MCF 10A (cell line): ENCODE measurements at regions of chr11 and their contacts with region 1.

Region 1: DNA sequence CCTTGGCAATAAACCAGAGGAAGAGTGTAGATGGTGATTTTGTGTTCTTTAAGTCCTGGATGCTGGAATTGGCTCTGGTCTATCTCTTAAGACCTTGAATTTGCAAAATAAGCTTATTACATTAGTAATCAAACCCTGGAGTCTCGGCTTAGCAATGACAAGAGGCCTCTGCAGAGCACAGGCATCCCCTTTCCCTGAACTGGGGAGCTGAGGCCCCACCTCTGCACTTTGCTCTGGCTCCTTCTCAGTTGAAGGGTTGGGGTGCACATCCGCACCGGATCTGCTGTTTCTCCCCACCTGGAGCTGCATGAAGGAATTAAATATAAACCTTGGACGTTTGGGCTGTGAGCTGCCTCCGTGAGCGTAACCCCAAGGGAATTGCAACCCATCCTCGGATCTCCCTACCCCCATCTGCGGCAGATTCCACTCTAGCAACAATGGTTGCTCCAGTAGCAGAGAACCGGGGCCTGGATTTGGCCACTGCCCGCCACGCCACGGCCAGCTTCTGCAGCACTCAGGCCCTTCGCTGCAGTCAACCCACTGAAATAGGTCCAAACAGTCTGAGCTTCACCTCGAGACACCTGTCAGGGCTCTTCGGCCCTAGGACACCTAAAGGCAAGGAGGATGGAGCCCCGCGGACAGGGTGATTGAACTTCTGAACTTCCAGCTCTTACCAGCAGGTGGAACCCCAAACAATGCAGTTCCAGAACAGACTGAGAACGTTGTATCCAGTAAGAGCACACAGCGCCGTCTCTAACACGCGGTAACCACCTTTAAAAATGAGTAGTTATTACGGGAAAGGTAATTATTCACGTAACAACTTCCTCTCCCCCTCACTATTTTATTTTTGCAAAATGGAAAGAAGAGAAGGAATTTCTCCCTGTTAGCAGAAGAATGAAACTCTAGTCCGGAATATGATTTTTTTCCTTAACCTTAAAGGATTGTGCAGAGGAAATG is 54.8 kb upstream of the CAPRIN1 start:
- DNase-seq: peak; percentile 85
- H3K4me3 Mint-ChIP-seq: peak overlapping the region; percentile 15
- H3K27ac Mint-ChIP-seq: no peak overlapping the region
- H3K4me1 Mint-ChIP-seq: peaks cover 12% of the 10 kb centered on the region
- H3K27me3 Mint-ChIP-seq: no peaks in the 10 kb centered on the region
- CTCF ChIP-seq: peak; percentile 76

Region 2: DNA sequence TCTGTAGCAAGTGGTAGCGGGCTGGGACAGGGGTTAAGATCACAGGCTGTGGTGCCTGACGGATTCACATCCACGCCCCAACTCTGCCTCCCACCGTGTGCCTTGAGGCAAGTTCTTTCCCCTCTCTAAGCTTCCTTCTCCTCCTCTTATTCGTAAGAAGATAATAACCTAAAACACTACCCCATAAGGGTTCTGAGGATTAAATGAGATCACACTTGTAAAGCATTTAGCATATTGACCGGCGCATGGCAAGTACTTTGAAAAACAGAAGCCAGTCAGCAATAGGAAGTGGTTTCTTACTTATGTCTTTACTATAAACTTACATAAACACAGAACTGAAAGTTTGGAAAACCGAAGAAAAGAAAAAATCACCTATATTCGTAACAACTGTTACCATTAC is 89.4 kb before region 1 on chr11:
- CTCF ChIA-PET with region 1: no interaction called
- POLR2A ChIA-PET with region 1: no interaction called
- intact Hi-C with region 1: no loop called
- DNase-seq: no peak
- H3K4me3 Mint-ChIP-seq: no peak overlapping the region
- H3K27ac Mint-ChIP-seq: no peak overlapping the region
- H3K4me1 Mint-ChIP-seq: peaks cover 2% of the 10 kb centered on the region
- H3K27me3 Mint-ChIP-seq: peaks cover 19% of the 10 kb centered on the region
- CTCF ChIP-seq: no peak

Region 3: GRCh38 chr11:33982661-33983060 is 14.1 kb before region 1 on chr11:
- CTCF ChIA-PET with region 1: interaction called, 14 read pairs
- POLR2A ChIA-PET with region 1: no interaction called
- intact Hi-C with region 1: no loop called
- DNase-seq: peak; percentile 33
- H3K4me3 Mint-ChIP-seq: no peak overlapping the region
- H3K27ac Mint-ChIP-seq: no peak overlapping the region
- H3K4me1 Mint-ChIP-seq: no peaks in the 10 kb centered on the region
- H3K27me3 Mint-ChIP-seq: peaks cover 29% of the 10 kb centered on the region
- CTCF ChIP-seq: no peak

Region 4: GRCh38 chr11:34028425-34028824 is 31.6 kb after region 1 on chr11:
- CTCF ChIA-PET with region 1: interaction called, 20 read pairs
- POLR2A ChIA-PET with region 1: interaction called, 10 read pairs
- intact Hi-C with region 1: no loop called
- DNase-seq: no peak
- H3K4me3 Mint-ChIP-seq: no peak overlapping the region
- H3K27ac Mint-ChIP-seq: no peak overlapping the region
- H3K4me1 Mint-ChIP-seq: peaks cover 11% of the 10 kb centered on the region
- H3K27me3 Mint-ChIP-seq: no peaks in the 10 kb centered on the region
- CTCF ChIP-seq: no peak

Region 5: DNA sequence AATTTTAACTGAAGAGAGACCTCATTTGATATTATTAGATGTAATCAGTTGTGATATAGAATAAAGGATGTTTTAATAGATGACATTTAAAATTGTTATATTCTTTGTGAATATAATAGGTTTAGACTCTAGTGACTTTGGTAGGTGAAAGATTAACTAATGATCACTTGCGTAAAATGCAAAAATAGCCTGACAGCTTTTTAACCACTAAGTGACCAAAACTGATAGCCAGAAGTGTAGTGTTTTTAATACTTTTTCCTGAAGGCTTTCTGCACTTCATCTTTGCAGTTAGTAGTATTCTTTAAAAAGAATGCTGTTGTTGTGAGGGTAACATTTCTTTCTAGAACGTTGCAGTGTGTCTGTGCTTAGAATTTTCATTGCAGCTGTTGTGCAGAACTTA is 59.9 kb after region 1 on chr11:
- CTCF ChIA-PET with region 1: interaction called, 30 read pairs
- POLR2A ChIA-PET with region 1: interaction called, 37 read pairs
- intact Hi-C with region 1: loop called (anchors 1 kb)
- DNase-seq: no peak
- H3K4me3 Mint-ChIP-seq: peak overlapping the region; percentile 8
- H3K27ac Mint-ChIP-seq: no peak overlapping the region
- H3K4me1 Mint-ChIP-seq: peaks cover 20% of the 10 kb centered on the region
- H3K27me3 Mint-ChIP-seq: no peaks in the 10 kb centered on the region
- CTCF ChIP-seq: no peak

Region 6: DNA sequence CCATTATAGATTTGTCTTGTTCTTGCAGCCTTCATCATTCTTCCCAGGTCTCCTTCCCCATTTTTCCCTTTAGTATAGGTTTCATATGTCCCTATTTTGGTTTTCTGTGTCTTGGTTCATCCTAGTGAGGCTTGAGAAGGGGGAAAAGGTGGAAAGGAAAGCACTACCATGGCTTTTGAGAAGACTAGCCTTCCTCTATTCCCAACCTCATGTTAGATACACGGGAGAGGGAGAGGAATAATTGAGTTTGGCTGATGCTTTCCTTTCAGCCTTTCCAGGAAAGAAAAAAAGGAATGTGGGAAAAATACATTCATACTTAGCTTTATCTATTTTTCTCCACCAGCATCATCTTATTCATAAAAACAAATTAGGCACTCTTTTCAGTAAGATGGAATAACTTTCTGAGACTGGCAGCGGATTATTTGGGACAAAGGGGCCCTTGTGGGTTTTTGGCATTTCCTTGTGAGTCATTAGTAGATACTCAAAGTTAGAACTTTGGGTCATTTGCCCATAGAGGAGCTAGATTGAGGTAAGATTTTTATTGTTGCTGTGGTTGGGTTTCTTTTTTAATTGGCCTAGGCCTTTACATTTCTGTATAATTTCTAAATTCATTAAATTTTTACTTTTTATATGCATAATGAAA is 78.5 kb after region 1 on chr11:
- CTCF ChIA-PET with region 1: interaction called, 19 read pairs
- POLR2A ChIA-PET with region 1: interaction called, 7 read pairs
- intact Hi-C with region 1: loop called (anchors 1 kb)
- DNase-seq: peak; percentile 63
- H3K4me3 Mint-ChIP-seq: no peak overlapping the region
- H3K27ac Mint-ChIP-seq: peak overlapping the region; percentile 69
- H3K4me1 Mint-ChIP-seq: peaks cover 20% of the 10 kb centered on the region
- H3K27me3 Mint-ChIP-seq: no peaks in the 10 kb centered on the region
- CTCF ChIP-seq: no peak

Region 7: GRCh38 chr11:34174412-34175041 is 177.8 kb after region 1 on chr11:
- CTCF ChIA-PET with region 1: interaction called, 3 read pairs
- POLR2A ChIA-PET with region 1: no interaction called
- intact Hi-C with region 1: loop called (anchors 2 kb)
- DNase-seq: peak; percentile 76
- H3K4me3 Mint-ChIP-seq: peak overlapping the region; percentile 45
- H3K27ac Mint-ChIP-seq: no peak overlapping the region
- H3K4me1 Mint-ChIP-seq: no peaks in the 10 kb centered on the region
- H3K27me3 Mint-ChIP-seq: no peaks in the 10 kb centered on the region
- CTCF ChIP-seq: peak; percentile 96